A549 (cell line): ENCODE measurements at regions of chr2 and their contacts with region 1.

Region 1: DNA sequence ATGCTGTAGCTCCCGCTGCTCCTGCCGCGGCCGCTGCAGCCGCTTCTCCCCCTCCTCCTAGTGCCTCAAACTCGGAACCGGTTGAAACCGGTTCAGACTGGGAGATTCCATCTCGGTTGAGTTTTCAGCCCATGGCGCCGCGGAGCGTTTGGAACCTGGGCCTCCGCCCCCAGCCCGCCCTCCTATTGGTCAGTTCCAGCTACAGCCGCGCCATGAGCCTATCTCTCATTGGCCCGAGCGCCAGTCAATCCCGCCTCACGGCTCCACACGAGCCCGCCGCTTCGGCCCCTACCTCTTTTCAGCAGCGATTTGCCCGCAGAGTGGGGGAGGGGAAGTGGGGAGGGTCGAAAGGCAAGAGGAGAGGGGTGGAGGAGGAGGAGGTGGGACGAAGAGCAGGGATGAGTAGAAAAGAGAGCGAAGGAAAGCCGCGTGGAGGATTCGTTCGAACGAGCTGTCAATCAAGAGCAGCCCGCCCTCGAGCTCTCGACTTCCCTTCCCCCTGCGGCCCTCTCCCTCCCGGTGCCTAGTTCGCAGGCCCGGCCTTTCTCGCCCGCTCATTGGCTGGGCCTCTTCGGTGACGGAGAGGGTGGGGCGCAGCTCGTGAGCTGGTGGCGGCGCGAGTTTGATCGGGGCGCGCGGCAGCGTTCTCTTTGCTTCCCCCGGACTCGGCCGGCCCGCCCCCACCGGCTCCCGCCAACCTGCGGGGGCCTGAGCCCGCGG is at the start of gene XPO1:
- DNase-seq: peak; percentile 97 to 100
- ATAC-seq: peak; percentile 82 to 92
- H3K4me3 ChIP-seq: peak within 1 kb of the TSS; percentile 83
- H3K27ac ChIP-seq: peak within 1 kb of the TSS; percentile 97 to 98
- H3K4me1 ChIP-seq: peaks cover 30% of the 10 kb centered on the region
- CTCF ChIP-seq: no peak
- EP300 ChIP-seq: peak in 1 of 2 experiments; percentile 13; a peak in 1 of 5 replicates
- POLR2A ChIP-seq: peak; percentile 86
- RAD21 ChIP-seq: no peak
- polyA plus RNA-seq, gene XPO1: 173 and 216 TPM in 2 replicates

Region 2: GRCh38 chr2:61854474-61855182 is 316.3 kb after region 1 on chr2:
- CTCF ChIA-PET with region 1: no interaction called
- POLR2A ChIA-PET with region 1: interaction called, 17 read pairs
- DNase-seq: peak; percentile 97 to 99
- ATAC-seq: peak; percentile 87 to 93
- H3K4me3 ChIP-seq: peak overlapping the region; percentile 63
- H3K27ac ChIP-seq: peak overlapping the region; percentile 94
- H3K4me1 ChIP-seq: peaks cover 6% of the 10 kb centered on the region; the same call in 1 of the 3 replicates
- CTCF ChIP-seq: no peak
- EP300 ChIP-seq: no peak
- POLR2A ChIP-seq: peak; percentile 40
- RAD21 ChIP-seq: no peak